Activated CD4-positive, alpha-beta T cell treated with anti-CD3 and anti-CD28 coated beads, Interleukin-2, amount 10 ng/mL, durations not matched to agents 7 days and 5 days (primary cell): ENCODE measurements at regions of chr14 and their contacts with region 1.

Region 1: DNA sequence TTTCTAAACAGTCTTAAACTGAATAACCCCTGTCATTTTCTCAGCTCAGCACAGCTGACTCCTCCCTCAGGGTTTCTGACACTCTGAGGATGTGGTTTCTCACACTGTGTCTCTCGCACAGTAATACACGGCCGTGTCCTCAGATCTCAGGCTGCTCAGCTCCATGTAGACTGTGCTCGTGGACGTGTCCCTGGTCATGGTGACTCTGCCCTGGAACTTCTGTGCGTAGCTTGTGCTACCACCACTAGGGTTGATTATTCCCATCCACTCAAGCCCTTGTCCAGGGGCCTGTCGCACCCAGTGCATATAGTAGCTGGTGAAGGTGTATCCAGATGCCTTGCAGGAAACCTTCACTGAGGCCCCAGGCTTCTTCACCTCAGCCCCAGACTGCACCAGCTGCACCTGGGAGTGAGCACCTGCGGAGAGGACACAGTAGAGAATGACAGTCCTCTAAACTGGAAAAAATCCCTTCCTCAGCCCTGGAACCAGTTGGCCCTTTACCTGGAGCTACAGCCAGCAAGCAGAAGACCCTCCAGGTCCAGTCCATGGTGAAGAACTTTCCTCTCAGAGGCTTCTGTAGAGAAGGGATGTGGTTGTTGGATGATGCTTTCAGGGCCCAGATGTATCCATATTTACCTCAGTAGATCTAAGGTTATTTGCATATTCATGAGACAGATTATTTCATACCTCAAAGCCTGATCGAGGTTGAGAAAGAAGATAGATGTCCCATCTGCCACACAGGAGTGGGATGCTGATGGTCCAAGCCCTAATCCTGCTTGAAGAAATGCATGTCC is 984.8 kb downstream of the TMEM121 start:
- DNase-seq: peak; percentile 78
- H3K4me3 Mint-ChIP-seq: peak overlapping the region; percentile 26
- H3K27ac Mint-ChIP-seq: peak overlapping the region; percentile 88
- H3K4me1 Mint-ChIP-seq: peaks cover 68% of the 10 kb centered on the region
- H3K27me3 Mint-ChIP-seq: peaks cover 3% of the 10 kb centered on the region

Region 2: DNA sequence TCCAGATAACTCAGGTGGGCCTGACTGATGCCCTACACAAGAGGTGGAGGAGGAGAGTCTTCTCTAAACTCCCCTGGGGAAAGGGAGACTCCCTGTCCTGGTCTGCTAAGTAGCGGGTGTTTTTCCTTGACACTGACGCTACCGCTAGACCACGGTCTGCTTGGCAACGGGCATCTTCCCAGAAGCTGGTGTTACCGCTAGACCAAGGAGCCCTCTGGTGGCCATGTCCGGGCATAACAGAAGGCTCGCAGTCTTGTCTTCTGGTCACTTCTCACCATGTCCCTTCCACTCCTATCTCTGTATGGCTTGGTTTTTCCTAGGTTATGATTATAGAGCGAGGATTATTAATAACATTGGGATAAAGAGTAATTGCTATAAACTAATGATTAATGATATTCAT is 19.4 kb before region 1 on chr14:
- CTCF ChIA-PET with region 1: interaction called, 17 read pairs
- POLR2A ChIA-PET with region 1: no interaction called
- DNase-seq: no peak
- H3K4me3 Mint-ChIP-seq: no peak overlapping the region
- H3K27ac Mint-ChIP-seq: no peak overlapping the region
- H3K4me1 Mint-ChIP-seq: peaks cover 35% of the 10 kb centered on the region
- H3K27me3 Mint-ChIP-seq: no peaks in the 10 kb centered on the region